ENCODE measurements at regions of chr5 and their contacts with region 1.

Region 1: GRCh38 chr5:31809050-31809870 is 170.3 kb downstream of the PDZD2 start:
- DNase-seq: peak; percentile 81
- H3K4me3 Mint-ChIP-seq: no peak overlapping the region
- H3K27ac Mint-ChIP-seq: no peak overlapping the region
- H3K4me1 Mint-ChIP-seq: peaks cover 6% of the 10 kb centered on the region
- H3K27me3 Mint-ChIP-seq: peaks cover 24% of the 10 kb centered on the region
- CTCF ChIP-seq: peak; percentile 79

Region 2: DNA sequence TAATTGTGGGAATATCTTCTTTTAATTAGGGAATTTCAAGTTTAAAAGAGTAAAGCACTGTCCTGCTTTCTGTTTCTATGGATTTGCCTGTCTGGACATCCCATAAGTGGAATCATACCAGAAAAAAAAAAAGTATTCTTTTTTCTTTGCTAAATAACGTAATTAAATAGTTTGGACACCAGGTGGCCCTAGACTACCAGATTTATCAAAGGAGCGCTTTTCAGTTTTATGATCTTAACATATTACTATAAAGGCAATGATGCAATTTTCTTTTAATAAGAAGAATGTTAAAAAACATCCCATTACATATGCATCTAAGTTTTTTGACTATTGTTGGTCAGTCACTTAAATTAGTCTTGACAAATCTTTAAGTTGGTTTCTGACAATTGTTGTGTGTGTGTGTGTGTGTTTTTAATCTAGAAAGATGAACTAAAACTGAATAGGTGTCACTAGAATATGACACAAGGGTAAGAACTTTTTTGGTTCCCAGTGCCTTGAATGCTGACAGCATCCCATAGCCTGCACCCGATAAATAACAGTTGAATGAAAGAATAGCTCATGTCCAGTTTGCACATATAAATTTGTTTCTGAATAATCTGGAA is 227.7 kb before region 1 on chr5:
- CTCF ChIA-PET with region 1: interaction called, 54 read pairs
- POLR2A ChIA-PET with region 1: interaction called, 3 read pairs
- intact Hi-C with region 1: loop called (anchors 1 kb)
- DNase-seq: peak; percentile 59
- H3K4me3 Mint-ChIP-seq: no peak overlapping the region
- H3K27ac Mint-ChIP-seq: no peak overlapping the region
- H3K4me1 Mint-ChIP-seq: peaks cover 5% of the 10 kb centered on the region
- H3K27me3 Mint-ChIP-seq: peaks cover 59% of the 10 kb centered on the region
- CTCF ChIP-seq: peak; percentile 37

Region 3: DNA sequence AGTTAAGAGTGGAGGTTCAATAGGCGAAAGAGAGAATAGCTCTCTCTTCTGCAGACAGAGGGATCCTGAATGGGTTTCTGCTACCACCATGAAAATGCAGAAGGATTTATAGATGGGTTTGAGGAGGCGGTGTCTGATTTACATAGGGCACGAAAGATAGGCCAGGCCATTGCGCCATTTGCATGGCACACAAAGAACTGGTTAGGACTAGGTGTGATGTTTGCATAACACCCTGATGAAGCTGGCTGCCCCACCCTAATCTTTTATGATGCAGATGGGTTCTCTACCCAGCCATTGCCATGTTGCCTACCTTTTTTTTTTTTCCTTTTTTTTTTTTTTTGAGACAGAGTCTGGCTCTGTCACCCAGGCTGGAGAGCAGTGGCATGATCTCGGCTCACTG is 221.7 kb before region 1 on chr5:
- CTCF ChIA-PET with region 1: interaction called, 44 read pairs
- POLR2A ChIA-PET with region 1: interaction called, 3 read pairs
- intact Hi-C with region 1: no loop called
- DNase-seq: no peak
- H3K4me3 Mint-ChIP-seq: no peak overlapping the region
- H3K27ac Mint-ChIP-seq: no peak overlapping the region
- H3K4me1 Mint-ChIP-seq: no peaks in the 10 kb centered on the region
- H3K27me3 Mint-ChIP-seq: peaks cover 24% of the 10 kb centered on the region
- CTCF ChIP-seq: no peak

Region 4: DNA sequence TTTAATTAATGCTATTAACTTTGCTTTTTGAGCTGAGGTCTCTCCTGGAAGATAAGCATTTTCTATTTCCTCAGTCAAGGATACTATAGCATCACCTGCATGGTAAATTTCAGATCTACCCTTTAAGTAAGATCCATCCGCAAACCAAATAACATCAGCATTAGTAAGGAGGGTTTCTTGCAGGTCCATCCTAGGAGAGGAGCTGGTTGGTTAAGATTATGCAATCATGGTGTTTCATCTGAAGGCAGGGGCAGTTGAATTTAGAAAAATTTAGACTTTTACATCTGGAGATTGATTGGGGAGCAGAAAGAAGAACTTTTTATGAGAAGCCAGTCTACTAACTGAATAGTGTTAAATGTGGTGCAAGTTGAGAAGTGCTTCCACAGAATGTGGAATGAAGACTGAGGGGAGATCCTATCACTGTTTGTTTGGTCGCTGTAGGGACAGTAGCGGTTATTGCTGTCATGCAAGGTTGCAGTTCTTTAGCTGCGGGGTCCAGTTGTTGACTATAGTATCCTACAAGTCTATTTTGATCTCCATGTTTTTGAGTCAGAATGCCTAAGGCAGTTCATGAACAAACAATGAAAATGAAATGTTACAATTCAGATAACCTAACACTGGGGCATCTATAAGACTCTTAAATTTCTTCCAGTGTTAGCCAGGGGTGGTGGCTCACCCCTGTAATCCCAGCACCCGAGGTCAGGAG is 215.7 kb before region 1 on chr5:
- CTCF ChIA-PET with region 1: interaction called, 44 read pairs
- POLR2A ChIA-PET with region 1: no interaction called
- intact Hi-C with region 1: no loop called
- DNase-seq: no peak
- H3K4me3 Mint-ChIP-seq: no peak overlapping the region
- H3K27ac Mint-ChIP-seq: no peak overlapping the region
- H3K4me1 Mint-ChIP-seq: no peaks in the 10 kb centered on the region
- H3K27me3 Mint-ChIP-seq: peaks cover 29% of the 10 kb centered on the region
- CTCF ChIP-seq: no peak

Region 5: GRCh38 chr5:31638748-31639418 is 170.4 kb before region 1 on chr5 and contains the start of gene PDZD2:
- CTCF ChIA-PET with region 1: interaction called, 39 read pairs
- POLR2A ChIA-PET with region 1: no interaction called
- intact Hi-C with region 1: loop called (anchors 2 kb)
- DNase-seq: peak; percentile 69
- H3K4me3 Mint-ChIP-seq: peak within 1 kb of the TSS; percentile 77
- H3K27ac Mint-ChIP-seq: no peak within 1 kb of the TSS
- H3K4me1 Mint-ChIP-seq: peaks cover 6% of the 10 kb centered on the region
- H3K27me3 Mint-ChIP-seq: no peaks in the 10 kb centered on the region
- CTCF ChIP-seq: peak; percentile 4
- total RNA-seq, gene PDZD2: 22.6 and 23.0 TPM in 2 replicates

Region 6: GRCh38 chr5:31664566-31664965 is 144.7 kb before region 1 on chr5:
- CTCF ChIA-PET with region 1: no interaction called
- POLR2A ChIA-PET with region 1: no interaction called
- intact Hi-C with region 1: loop called (anchors 10 kb)
- DNase-seq: peak; percentile 59
- H3K4me3 Mint-ChIP-seq: no peak overlapping the region
- H3K27ac Mint-ChIP-seq: no peak overlapping the region
- H3K4me1 Mint-ChIP-seq: no peaks in the 10 kb centered on the region
- H3K27me3 Mint-ChIP-seq: peaks cover 25% of the 10 kb centered on the region
- CTCF ChIP-seq: no peak

Region 7: DNA sequence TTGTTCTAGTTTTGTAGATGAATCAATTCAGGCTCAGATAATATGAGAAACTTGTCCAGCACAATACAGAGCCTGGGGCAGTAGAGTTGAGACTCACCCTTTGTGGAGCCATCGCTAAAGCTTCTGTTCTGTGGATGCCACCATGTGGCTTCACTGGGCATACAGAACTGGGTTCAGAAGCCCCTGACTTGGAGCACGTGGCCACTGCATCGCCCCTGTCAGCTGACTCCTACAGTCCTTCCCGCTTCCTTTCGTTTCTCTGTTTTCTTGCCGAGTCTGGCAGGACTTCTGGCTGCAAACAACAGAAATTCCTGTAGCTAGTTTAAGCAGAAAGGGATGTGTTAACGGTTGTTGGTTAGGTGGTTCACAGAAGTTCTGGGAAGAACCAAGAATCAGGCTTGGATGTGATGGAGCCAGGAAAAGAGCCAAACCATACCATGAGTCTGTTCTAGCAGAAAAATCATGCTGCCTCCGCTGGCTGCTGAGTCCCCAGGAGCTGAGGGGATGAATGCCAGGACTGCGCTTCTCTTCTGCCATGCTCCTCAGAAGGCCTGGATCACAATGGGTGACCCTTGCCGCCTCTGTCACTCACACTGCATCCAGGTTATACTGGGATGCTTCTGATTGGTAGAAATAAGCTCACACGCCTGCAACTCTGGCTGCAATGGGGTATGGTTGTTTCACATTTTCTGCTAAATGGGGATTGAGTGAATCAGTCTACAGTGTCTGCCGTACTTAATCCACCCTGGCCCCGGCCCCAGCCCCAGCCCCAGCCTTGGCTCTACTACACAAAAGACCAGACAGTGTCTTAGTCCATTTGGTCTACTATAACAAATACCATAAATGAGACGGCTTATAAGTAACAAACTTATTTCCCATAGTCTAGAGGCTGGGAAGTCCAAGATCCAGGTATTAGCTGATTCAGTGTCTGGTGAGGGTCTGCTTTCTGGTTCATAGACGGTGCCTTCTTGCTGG is 102.3 kb after region 1 on chr5:
- CTCF ChIA-PET with region 1: no interaction called
- POLR2A ChIA-PET with region 1: no interaction called
- intact Hi-C with region 1: no loop called
- DNase-seq: no peak
- H3K4me3 Mint-ChIP-seq: no peak overlapping the region
- H3K27ac Mint-ChIP-seq: no peak overlapping the region
- H3K4me1 Mint-ChIP-seq: peaks cover 30% of the 10 kb centered on the region
- H3K27me3 Mint-ChIP-seq: no peaks in the 10 kb centered on the region
- CTCF ChIP-seq: no peak